Aorta (tissue), 5 donors: ENCODE measurements at regions of chr18 and their contacts with region 1.

Region 1: DNA sequence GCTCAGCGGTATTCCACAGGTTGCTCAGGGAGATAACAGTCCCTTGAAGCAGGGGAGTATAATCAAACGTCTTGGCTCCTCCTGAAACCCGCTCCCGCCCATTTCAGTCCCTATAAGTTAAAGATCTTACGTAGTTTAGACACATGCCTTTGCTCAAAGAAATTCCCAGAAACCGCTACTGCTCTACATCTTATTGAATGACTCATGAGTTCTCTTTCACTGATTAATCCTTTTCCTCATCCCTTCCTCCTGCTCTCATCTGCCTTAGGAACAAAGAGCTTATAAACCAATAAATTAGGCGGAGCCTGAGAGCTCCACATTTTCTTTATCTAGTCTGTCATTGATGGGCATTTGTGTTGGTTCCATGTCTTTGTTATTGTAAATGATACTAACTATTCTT is 4.2 kb upstream of the SERPINB4 start:
- DNase-seq: no peak
- ATAC-seq: no peak
- H3K4me3 ChIP-seq: no peak overlapping the region
- H3K27ac ChIP-seq: no peak overlapping the region
- H3K4me1 ChIP-seq: no peaks in the 10 kb centered on the region
- H3K27me3 ChIP-seq: no peaks in the 10 kb centered on the region

Region 2: GRCh38 chr18:63708650-63709049 is 60.4 kb after region 1 on chr18:
- intact Hi-C with region 1: loop called in 1 of 2 experiments (anchors 10 kb)
- DNase-seq: no peak
- ATAC-seq: no peak
- H3K4me3 ChIP-seq: no peak overlapping the region
- H3K27ac ChIP-seq: no peak overlapping the region
- H3K4me1 ChIP-seq: no peaks in the 10 kb centered on the region
- H3K27me3 ChIP-seq: no peaks in the 10 kb centered on the region